Right lobe of liver (tissue), 6 donors: ENCODE measurements at regions of chr5 and their contacts with region 1.

Region 1: DNA sequence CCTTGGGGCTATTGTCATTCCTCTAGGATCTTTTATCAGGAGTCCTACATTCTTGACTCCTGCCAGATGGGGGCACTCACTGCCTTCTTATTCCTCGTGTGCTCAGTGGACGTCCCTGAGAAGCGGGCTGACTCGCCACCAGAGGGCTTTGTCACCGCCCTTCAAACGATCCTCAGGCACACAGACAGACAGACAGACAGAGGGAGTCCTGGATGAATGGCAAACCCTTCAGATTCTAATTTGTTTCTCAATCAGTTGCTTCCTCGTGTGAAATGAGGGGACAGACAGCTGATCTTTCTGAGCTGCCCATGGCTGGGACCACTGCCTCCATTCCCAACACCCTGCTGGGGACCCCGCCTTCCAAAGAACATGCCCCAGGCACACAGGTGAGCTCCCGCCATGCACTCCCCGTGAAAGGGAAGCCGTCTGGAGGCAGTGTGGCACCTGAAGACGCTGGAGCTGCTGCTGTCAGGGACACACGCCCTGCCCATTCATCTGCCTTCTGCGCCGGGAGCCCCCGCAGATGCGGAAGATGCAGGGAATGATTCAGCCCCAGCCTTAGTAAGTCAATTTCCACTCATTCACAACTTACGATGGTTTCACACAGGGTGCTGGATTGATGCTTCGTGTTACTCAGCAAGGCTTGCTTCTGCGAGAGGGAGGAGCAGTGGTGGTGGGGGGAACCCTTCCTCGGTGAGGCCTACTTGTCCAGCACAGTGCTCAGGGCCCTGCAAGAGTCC is 24.9 kb upstream of the SH3PXD2B start:
- DNase-seq: peak; percentile 82 to 85 (median 83)
- ATAC-seq: peak; percentile 99 to 100 (median 100)
- H3K4me3 ChIP-seq: no peak overlapping the region
- H3K27ac ChIP-seq: no peak overlapping the region
- H3K4me1 ChIP-seq: no peaks in the 10 kb centered on the region
- H3K27me3 ChIP-seq: no peaks in the 10 kb centered on the region
- CTCF ChIP-seq: peak; percentile 79 to 98 (median 84)
- POLR2A ChIP-seq: no peak

Region 2: DNA sequence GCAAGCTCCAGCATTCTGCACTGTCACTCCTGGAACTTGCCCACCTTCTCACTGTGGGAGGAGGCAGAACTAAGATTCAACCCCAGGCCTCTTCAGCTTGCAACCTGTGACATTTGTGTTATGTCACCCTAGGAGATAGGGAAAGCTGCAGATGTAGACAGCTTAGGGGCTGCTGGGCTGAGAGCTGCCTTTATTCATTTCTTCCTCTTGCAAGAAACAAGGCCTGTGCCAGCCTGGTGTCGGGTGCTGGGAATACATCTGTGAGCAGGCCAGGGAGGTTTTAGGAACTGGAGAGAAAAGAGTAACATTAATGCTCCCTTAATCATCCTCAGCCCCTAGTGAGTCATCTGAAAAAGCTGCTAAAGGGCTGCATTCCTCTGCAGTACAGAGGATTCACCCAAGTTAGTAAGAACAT is 958.0 kb before region 1 on chr5:
- intact Hi-C with region 1: no loop called
- DNase-seq: no peak
- ATAC-seq: no peak
- H3K4me3 ChIP-seq: no peak overlapping the region
- H3K27ac ChIP-seq: no peak overlapping the region
- H3K4me1 ChIP-seq: no peaks in the 10 kb centered on the region
- H3K27me3 ChIP-seq: no peaks in the 10 kb centered on the region
- CTCF ChIP-seq: no peak
- POLR2A ChIP-seq: no peak

Region 3: DNA sequence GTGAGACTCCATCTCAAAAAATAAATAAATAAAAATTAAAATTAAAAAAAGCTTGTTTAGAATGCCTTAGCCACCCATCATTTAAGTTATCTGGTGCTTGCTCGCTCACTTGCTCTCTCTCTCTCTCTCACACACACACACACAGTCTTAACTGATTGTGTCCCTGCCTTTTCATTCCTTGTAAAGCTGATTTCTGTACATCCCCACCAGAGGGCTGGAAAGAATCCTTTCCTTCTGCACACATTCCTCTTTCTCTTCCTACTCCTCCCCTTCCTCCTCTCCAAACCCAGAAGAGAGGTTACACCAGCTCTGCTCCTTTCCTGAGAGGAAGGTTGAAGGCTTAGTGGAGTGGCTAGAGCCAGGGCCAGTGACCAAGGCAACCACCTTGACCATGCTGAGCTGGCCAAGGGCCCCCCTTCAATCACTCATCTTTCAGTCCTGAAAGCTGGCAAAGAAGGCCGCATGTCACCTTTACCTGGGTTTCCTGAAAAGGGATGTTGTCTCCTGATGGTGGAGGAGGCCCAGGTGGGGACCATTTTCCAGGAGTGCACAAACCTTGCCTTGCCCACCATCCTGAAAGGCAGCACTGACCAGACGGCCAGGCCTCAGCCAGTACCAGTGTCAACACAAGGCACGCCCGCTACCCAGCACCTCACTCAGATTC is 316.8 kb before region 1 on chr5:
- intact Hi-C with region 1: no loop called
- DNase-seq: no peak
- ATAC-seq: no peak
- H3K4me3 ChIP-seq: no peak overlapping the region
- H3K27ac ChIP-seq: no peak overlapping the region
- H3K4me1 ChIP-seq: peaks cover 0 to 20% (median 0%) of the 10 kb centered on the region in 4 donors
- H3K27me3 ChIP-seq: no peaks in the 10 kb centered on the region
- CTCF ChIP-seq: no peak
- POLR2A ChIP-seq: no peak

Region 4: DNA sequence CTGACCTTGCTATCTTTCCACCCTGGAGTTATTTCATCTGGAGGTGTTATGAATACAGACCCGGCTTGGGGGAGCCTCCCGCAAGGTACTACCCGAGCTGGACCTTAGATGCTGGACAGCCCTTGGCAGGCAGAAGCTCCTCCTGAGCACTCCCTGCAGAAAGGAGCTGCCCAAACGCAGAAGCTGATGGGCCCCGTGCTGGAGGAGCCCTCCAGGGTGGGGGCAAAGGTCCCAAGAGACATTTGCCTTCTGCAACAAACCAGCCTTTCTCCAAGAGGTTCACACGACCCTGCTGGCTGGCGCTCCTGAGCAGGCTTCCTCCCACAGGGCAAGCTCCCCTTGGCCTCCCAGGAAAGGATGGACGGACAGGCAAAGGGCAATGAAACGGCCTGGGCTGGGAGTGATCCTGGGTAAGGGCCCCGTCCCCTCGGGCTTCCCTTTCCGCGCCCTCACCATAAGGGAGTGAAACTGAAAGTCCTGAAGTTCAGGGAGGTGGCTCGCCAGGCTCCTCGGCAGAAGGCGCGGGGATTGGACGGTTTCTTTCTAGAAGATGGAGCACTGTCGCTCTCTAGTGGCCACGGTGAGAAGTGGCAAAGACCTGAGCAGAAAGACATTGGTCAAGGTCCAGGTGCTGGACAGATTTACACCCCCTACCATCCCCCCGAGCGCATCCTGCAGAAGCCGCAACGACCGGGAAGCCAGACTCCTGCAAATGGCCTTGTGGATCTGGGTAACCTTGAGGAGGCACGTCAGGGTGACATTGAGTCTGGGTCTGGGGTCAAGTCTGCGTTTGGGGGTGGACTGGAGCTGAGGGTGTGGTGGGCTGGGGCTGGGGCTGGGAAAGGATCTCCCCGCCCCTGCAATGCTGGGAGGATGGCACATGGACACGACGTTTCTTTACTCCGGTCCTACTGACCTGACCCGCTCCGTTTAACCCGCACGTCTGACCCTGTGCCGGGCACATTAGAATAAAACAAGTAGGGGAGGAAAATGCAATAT is 218.2 kb after region 1 on chr5:
- intact Hi-C with region 1: loop called (anchors 2 kb)
- DNase-seq: peak; percentile 88 to 91 (median 90)
- ATAC-seq: peak; percentile 95 to 98 (median 97)
- H3K4me3 ChIP-seq: peak overlapping the region; percentile 71 to 74 (median 74)
- H3K27ac ChIP-seq: peak overlapping the region; percentile 43 to 81 (median 79)
- H3K4me1 ChIP-seq: peaks cover 0 to 4% (median 0%) of the 10 kb centered on the region in 4 donors
- H3K27me3 ChIP-seq: no peaks in the 10 kb centered on the region
- CTCF ChIP-seq: peak; percentile 86 to 97 (median 92)
- POLR2A ChIP-seq: no peak